Heart right ventricle (tissue), 16 donors: ENCODE measurements at regions of chr9 and their contacts with region 1.

Region 1: GRCh38 chr9:469672-470551 is 255.2 kb downstream of the DOCK8 start:
- DNase-seq: peak; percentile 81 to 89
- ATAC-seq: peak; percentile 97 to 99 (median 98)
- H3K4me3 ChIP-seq: peak overlapping the region; percentile 35 to 73 (median 64)
- H3K27ac ChIP-seq: peak overlapping the region in 9 of 10 donors; percentile 76 to 91 (median 87)
- H3K4me1 ChIP-seq: peaks cover 0 to 29% (median 13%) of the 10 kb centered on the region in 9 donors
- H3K27me3 ChIP-seq: no peaks in the 10 kb centered on the region
- CTCF ChIP-seq: no peak

Region 2: DNA sequence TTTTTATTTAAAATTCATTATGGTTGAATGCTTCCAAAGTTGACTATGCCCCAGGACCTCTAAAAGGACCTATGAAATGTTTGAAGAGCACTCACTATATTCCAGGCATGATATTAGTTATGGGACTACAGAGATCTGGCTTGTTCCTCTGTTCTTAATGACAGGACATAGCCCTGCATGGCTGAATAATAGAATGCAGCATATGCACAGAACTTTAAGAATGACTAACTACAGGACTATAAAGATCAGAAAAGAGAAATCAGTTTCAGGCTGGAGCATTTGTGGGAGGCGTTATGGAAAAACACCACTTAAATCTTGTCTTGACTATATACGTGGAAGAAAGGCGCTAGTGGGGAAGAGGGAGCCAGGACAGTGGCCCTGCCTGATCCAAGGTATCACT is 16.1 kb before region 1 on chr9:
- intact Hi-C with region 1: loop called in 1 of 10 experiments (anchors 2 kb)
- DNase-seq: no peak
- ATAC-seq: no peak
- H3K4me3 ChIP-seq: no peak overlapping the region
- H3K27ac ChIP-seq: no peak overlapping the region
- H3K4me1 ChIP-seq: peaks cover 0 to 8% (median 0%) of the 10 kb centered on the region in 9 donors
- H3K27me3 ChIP-seq: no peaks in the 10 kb centered on the region
- CTCF ChIP-seq: no peak

Region 3: DNA sequence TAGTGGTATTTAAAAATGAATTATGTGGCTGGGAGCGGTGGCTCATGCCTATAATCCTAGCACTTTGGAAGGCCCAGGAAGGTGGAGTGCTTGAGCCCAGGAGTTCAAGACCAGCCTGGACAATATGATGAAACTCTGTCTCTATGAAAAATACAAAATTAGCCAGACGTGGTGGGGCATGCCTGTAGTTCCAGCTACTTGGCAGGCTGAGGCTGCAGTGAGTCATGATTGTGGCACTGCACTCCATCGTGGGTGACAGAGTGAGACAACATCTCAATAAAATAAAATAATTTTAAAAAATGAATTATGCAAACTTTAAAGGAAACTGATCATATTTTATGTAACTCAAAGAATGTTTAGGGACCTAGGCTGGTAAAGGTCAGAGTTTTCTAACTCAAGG is 60.8 kb after region 1 on chr9:
- intact Hi-C with region 1: loop called in 2 of 10 experiments (anchors 5 to 10 kb)
- DNase-seq: peak; percentile 33 to 36
- ATAC-seq: peak in 6 of 8 donors; percentile 39 to 86 (median 59)
- H3K4me3 ChIP-seq: no peak overlapping the region
- H3K27ac ChIP-seq: peak overlapping the region in 4 of 10 donors; percentile 1 to 16 (median 8)
- H3K4me1 ChIP-seq: peaks cover 4 to 60% (median 36%) of the 10 kb centered on the region in 9 donors
- H3K27me3 ChIP-seq: no peaks in the 10 kb centered on the region
- CTCF ChIP-seq: no peak

Region 4: GRCh38 chr9:546797-547223 is 76.9 kb after region 1 on chr9:
- intact Hi-C with region 1: loop called in 1 of 10 experiments (anchors 10 kb)
- DNase-seq: peak in 1 of 2 donors; percentile 31
- ATAC-seq: peak; percentile 62 to 83 (median 77)
- H3K4me3 ChIP-seq: peak overlapping the region in 5 of 10 donors; percentile 23 to 34 (median 31)
- H3K27ac ChIP-seq: peak overlapping the region; percentile 8 to 80 (median 70)
- H3K4me1 ChIP-seq: peaks cover 0 to 64% (median 41%) of the 10 kb centered on the region in 9 donors
- H3K27me3 ChIP-seq: no peaks in the 10 kb centered on the region
- CTCF ChIP-seq: peak in 8 of 9 donors; percentile 30 to 65 (median 42)

Region 5: DNA sequence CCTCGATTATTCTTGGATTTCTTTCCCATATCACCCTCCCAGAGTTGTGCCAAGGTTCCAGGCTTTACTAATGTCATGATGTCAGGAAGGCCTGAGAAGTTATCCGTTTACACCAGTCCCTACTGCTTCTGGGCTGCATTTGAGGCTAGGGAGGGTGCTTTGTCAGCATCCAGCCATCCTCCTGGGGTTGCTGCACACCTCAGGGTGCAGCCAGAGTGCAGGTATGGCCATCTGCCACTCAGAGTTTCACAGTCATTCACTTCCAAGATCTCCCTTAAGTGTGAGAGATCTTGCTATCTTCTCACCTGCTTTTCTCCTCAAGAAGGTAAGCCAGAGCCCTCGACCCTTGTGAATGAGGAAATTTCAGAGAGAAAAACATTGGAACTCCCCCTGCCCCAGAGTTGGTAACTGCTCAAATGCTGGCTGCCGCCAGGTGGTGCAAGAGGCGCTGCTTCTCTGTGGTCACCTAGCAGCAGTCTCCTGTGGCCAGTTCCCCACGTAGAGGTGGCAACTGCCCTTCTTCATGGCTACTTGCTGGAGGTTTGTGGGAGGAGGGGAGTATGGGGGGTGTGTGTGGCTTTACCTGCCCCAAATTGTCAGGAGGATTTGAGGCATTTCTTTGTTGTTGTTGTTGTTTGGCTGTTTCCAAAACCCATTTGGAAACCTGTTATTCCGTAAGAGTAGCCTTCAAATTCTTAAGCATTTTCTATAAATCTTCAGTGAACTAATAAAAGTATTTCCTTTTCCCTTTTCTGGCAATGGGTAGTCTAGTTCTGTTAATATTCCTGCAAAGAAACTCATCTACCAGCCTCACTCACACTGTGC is 112.0 kb after region 1 on chr9:
- intact Hi-C with region 1: loop called in 1 of 10 experiments (anchors 10 kb)
- DNase-seq: no peak
- ATAC-seq: peak in 1 of 8 donors; percentile 10
- H3K4me3 ChIP-seq: no peak overlapping the region
- H3K27ac ChIP-seq: peak overlapping the region in 2 of 10 donors; percentile 22 to 37
- H3K4me1 ChIP-seq: peaks cover 0 to 27% (median 10%) of the 10 kb centered on the region in 9 donors
- H3K27me3 ChIP-seq: no peaks in the 10 kb centered on the region
- CTCF ChIP-seq: no peak

Region 6: DNA sequence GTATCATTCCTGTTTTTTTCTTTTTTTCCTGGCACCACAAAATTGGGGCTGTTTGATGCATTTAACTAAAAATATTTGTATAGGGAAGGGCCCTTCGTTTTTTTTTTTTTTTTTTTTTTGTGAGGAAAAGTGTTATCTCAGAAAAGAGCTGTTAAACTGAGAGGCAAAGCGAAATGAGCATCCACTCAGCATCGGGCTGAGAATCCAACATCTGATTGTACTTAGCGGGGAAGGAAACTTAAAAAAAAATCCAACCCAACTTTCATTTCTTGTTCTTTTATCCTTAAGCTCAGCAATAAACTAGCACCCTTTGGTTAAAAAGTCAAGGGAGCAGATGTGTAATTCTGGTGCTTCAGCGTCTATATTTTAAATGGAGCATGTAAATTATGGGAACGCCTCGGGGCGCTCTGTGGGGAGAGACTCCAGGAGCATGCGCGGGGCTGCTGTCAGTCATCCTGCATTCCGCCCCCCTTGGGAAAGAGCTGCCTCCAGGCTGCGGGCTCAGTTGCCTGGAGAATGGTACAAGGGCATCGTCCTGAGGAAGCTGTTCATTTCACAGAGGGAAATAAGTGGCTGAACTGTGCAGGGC is 613.5 kb after region 1 on chr9:
- intact Hi-C with region 1: no loop called
- DNase-seq: peak; percentile 27
- ATAC-seq: peak in 7 of 8 donors; percentile 43 to 82 (median 59)
- H3K4me3 ChIP-seq: peak overlapping the region in 6 of 10 donors; percentile 0 to 42 (median 36)
- H3K27ac ChIP-seq: no peak overlapping the region
- H3K4me1 ChIP-seq: peaks cover 0 to 3% (median 0%) of the 10 kb centered on the region in 9 donors
- H3K27me3 ChIP-seq: peaks cover 0 to 17% (median 7%) of the 10 kb centered on the region in 7 donors
- CTCF ChIP-seq: no peak